Testis (tissue), 5 donors: ENCODE measurements at regions of chr14 and their contacts with region 1.

Region 1: DNA sequence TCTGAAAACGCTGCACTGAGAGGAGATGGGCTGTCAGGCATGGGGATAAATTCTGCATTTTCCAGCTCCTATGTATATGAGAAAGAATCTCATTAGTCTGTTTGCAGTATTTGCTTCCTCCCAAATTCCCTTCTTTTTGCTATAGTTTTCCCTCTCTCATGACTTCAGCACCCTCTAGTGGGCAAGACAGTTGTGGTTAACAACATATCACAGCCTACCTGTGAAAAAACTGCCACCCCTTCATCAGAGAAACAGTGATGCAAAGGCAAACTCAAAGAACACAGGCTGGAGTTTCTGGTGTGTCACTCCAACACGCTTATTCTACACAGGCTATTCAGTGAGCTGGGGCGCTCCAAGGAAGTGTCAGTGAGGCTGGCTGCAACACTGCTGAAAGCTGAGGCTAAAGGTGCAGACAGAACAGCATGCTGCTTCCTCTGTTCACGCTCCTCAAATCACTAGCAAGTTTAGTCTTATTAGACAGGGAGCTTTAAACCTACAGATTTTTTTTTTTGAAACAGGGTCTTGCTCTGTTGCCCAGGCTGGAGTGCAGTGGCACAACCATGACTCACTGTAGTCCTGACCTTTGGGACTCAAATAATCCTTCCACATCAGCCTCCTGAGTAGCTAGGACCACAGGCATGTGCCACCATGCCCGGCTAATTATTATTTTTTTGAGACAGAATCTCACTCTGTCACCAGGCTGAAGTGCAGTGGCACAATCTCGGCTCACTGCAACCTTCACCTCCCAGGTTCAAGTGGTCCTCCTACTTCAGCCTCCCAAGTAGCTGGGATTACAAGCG is 19.3 kb downstream of the ZC2HC1C start:
- DNase-seq: peak; percentile 64
- H3K4me3 ChIP-seq: no peak overlapping the region
- H3K27ac ChIP-seq: no peak overlapping the region
- H3K4me1 ChIP-seq: no peaks in the 10 kb centered on the region
- H3K27me3 ChIP-seq: no peaks in the 10 kb centered on the region
- CTCF ChIP-seq: peak; percentile 44 to 71 (median 62)
- POLR2A ChIP-seq: no peak

Region 2: GRCh38 chr14:74913986-74914573 is 174.7 kb before region 1 on chr14:
- intact Hi-C with region 1: loop called (anchors 10 kb)
- DNase-seq: peak; percentile 88
- H3K4me3 ChIP-seq: no peak overlapping the region
- H3K27ac ChIP-seq: peak overlapping the region in 1 of 2 donors; percentile 57
- H3K4me1 ChIP-seq: peaks cover 37% of the 10 kb centered on the region
- H3K27me3 ChIP-seq: no peaks in the 10 kb centered on the region
- CTCF ChIP-seq: peak; percentile 69 to 73 (median 70)
- POLR2A ChIP-seq: no peak

Region 3: DNA sequence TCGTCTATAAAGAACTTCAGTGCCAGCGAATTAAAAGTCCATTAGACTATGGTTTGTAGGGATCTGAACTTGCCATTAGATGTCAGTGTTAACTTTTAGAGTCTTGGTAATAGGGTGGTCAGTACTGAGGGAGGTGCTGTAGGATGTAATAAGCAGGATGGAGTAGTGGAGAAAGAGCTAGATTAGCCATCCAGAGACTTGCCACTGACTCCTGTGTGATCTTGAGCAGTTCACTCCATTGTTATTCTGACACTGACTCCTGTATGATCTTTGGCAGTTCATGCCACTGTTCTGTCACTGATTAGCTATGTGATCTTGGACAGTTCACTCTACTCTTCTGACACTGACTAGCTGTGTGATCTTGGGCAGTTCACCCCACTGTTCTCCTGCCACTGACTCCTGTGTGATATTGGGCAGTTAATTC is 705.9 kb after region 1 on chr14:
- intact Hi-C with region 1: no loop called
- DNase-seq: no peak
- H3K4me3 ChIP-seq: no peak overlapping the region
- H3K27ac ChIP-seq: no peak overlapping the region
- H3K4me1 ChIP-seq: no peaks in the 10 kb centered on the region
- H3K27me3 ChIP-seq: no peaks in the 10 kb centered on the region
- CTCF ChIP-seq: no peak
- POLR2A ChIP-seq: no peak